ENCODE measurements at regions of chr4 and their contacts with region 1.

Region 1: GRCh38 chr4:66351761-66352160 is 681.5 kb upstream of the EPHA5 start:
- DNase-seq: no peak
- H3K4me3 ChIP-seq: no peak overlapping the region
- H3K27ac ChIP-seq: no peak overlapping the region
- H3K4me1 ChIP-seq: no peaks in the 10 kb centered on the region
- H3K27me3 ChIP-seq: no peaks in the 10 kb centered on the region
- CTCF ChIP-seq: no peak
- POLR2A ChIP-seq: no peak

Region 2: DNA sequence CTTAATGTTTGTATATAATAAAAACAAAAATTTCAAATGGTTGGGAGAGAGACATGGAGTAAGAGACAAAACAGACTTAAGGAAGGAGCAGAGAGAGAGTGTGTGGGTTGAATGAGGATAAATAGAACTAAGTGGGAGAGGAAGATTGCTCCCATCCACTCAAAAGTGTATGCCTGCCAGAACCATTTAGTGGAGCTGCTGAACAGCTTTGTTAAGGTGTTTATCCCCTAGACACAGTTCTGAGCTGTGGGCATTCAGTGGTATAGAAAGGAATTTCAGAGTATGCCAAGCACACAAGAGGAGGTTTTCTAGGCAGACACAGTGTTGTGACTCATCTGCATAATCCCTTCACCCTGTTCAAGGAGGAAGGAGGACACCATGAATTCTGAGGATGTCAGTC is 172.9 kb before region 1 on chr4:
- intact Hi-C with region 1: loop called (anchors 2 kb)
- DNase-seq: no peak
- H3K4me3 ChIP-seq: no peak overlapping the region
- H3K27ac ChIP-seq: no peak overlapping the region
- H3K4me1 ChIP-seq: no peaks in the 10 kb centered on the region
- H3K27me3 ChIP-seq: no peaks in the 10 kb centered on the region
- CTCF ChIP-seq: no peak
- POLR2A ChIP-seq: no peak

Measured in vagina (tissue), 2 donors.